ENCODE measurements at regions of chr15 and their contacts with region 1.

Region 1: DNA sequence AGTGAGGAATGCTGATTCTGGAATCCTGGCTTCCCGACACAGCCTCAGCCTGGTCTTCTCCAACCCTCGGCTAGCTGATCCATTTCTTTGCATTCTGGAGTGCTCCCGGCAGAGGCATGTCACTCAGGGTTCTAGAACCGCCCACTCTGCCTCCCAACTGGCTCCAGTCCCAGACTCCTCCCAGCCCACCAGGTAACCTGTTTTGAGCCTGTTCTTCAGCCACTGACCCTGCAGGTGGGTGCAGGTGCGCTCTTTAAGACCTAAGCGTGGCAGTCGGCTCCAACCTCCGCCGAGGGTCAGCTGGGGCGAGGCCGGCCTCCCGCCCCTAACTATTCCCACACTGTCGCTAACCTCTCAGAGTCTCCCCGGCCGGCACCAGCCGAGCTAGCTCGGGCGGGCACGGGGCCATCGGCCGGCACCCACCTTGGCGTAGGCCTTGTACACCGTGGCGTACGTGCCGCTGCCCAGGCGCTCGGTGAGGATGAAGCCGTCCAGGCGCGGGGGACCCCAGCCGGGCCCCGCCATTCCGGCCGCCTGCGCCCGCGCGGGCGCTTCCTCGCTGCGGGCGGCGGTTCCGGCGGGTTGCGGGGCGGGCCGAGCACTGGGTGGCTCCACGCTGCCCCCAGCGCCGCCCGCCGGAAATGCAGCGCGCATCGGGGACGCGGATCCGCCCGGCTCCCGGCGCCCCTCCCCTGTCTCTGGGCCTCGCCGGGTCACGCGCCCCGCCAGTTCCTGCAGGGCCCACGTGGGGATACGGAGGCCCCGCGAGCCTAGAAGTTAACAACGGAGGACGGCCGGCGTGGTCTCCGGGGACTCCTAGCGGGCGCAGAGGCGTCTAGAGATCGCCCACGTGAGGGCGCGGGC is at the start of gene ULK3:
- DNase-seq: peak; percentile 90 to 96
- ATAC-seq: peak; percentile 87 to 91
- H3K4me3 ChIP-seq: peak within 1 kb of the TSS; percentile 66
- H3K27ac ChIP-seq: peak within 1 kb of the TSS; percentile 89 to 95
- H3K4me1 ChIP-seq: peaks cover 13% of the 10 kb centered on the region
- CTCF ChIP-seq: peak; percentile 78
- EP300 ChIP-seq: no peak
- POLR2A ChIP-seq: peak; percentile 88
- RAD21 ChIP-seq: no peak; a peak in 1 of 5 replicates
- polyA plus RNA-seq, gene ULK3: 48.9 and 58.4 TPM in 2 replicates

Region 2: DNA sequence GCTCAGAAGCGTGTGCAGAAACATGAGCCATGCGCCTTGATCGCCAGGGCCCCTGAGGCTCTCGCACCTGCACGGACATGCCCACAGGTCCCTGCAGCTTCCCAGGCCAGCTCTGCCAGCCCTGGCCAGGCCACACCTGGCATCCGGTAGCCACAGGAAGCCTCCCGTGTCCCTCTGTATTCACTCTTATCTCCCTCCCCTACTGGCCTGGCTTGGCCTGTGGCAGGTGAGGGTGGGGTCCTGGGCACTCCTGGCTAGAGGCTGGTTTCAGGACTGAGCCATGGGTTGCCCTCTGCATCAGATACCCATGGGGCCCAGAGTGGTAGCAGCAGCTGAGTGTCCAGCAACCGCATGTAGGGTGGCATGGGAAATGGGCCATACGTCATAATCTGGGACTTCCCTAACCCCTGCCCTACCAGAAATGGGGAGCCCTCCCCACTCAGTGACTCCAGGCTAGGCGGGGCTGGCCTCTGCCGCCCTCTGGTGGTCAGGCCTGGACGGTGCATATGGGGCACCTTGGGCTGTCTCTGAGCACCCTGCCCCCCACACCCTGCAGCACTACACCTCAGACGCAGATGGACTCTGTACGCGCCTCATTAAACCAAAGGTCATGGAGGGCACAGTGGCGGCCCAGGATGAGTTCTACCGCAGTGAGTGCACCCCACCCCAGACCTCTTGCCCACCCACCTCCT is 42.8 kb before region 1 on chr15:
- CTCF ChIA-PET with region 1: interaction called, 1,908 read pairs
- POLR2A ChIA-PET with region 1: interaction called, 3 read pairs
- DNase-seq: peak; percentile 68 to 95
- ATAC-seq: peak; percentile 85 to 97
- H3K4me3 ChIP-seq: no peak overlapping the region
- H3K27ac ChIP-seq: peak overlapping the region in 1 of 2 experiments; percentile 57; a peak in 3 of 6 replicates
- H3K4me1 ChIP-seq: peaks cover 3% of the 10 kb centered on the region; the same call in 1 of the 3 replicates
- CTCF ChIP-seq: peak; percentile 90
- EP300 ChIP-seq: no peak
- POLR2A ChIP-seq: no peak
- RAD21 ChIP-seq: peak; percentile 72 to 74

Region 3: DNA sequence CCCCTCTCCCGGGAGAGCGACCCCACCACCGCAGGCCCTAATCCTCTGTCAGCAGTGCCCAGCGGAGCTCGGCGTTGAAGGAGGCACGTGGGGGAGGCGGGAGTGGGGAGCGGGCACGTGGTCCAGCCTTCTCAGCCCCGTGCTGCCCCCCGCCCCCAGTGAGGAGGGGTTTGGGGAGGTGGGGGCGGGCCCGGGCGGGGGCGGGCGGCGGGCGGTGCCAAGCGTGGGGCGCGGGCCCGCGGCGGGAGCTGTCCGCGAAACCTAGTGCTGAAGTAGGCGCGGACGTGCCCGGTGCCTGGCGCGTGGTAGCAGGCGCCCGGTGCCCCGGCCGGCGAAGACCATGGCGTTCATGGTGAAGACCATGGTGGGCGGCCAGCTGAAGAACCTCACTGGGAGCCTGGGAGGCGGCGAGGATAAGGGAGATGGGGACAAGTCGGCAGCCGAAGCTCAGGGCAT is 16.4 kb before region 1 on chr15 and contains the start of gene CPLX3:
- CTCF ChIA-PET with region 1: interaction called, 1,908 read pairs
- POLR2A ChIA-PET with region 1: interaction called, 3 read pairs
- DNase-seq: no peak
- ATAC-seq: peak in 1 of 2 experiments; percentile 19; a peak in 1 of 6 replicates
- H3K4me3 ChIP-seq: no peak within 1 kb of the TSS
- H3K27ac ChIP-seq: no peak within 1 kb of the TSS
- H3K4me1 ChIP-seq: peaks cover 7% of the 10 kb centered on the region; the same call in 1 of the 3 replicates
- CTCF ChIP-seq: no peak
- EP300 ChIP-seq: no peak
- POLR2A ChIP-seq: no peak
- RAD21 ChIP-seq: no peak
- polyA plus RNA-seq, gene CPLX3: 0.05 TPM in 1 of 2 replicates, not detected in the other

Region 4: DNA sequence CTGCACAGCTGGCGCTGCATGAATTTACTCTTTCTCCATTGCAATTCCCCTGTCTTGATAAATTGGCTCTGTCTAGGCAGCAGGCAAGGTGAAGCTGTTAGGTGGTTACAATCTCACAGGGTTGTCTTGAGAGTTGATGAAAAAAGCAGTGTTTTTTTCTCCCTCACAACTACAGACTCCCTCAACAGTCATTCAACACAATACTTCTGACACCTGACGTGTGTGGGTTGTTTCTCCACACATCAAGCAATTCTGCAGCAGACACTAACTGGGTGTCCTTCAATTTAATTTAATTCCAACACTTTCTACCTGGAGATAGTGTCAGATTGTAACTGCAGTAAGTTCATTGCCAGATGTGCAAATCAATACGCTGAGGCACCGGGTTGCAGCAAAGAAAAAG is 35.5 kb after region 1 on chr15:
- CTCF ChIA-PET with region 1: no interaction called
- POLR2A ChIA-PET with region 1: no interaction called
- DNase-seq: no peak
- ATAC-seq: no peak
- H3K4me3 ChIP-seq: no peak overlapping the region
- H3K27ac ChIP-seq: no peak overlapping the region
- H3K4me1 ChIP-seq: no peaks in the 10 kb centered on the region
- CTCF ChIP-seq: no peak
- EP300 ChIP-seq: no peak
- POLR2A ChIP-seq: no peak
- RAD21 ChIP-seq: no peak

Region 5: GRCh38 chr15:74889883-74890664 is 47.3 kb after region 1 on chr15 and contains the start of gene MPI:
- CTCF ChIA-PET with region 1: no interaction called
- POLR2A ChIA-PET with region 1: no interaction called
- DNase-seq: peak; percentile 80 to 100
- ATAC-seq: peak; percentile 96 to 99
- H3K4me3 ChIP-seq: peak within 1 kb of the TSS; percentile 63
- H3K27ac ChIP-seq: peak within 1 kb of the TSS; percentile 78 to 90
- H3K4me1 ChIP-seq: peaks cover 9% of the 10 kb centered on the region; the same call in 1 of the 3 replicates
- CTCF ChIP-seq: no peak
- EP300 ChIP-seq: no peak
- POLR2A ChIP-seq: peak; percentile 99
- RAD21 ChIP-seq: no peak
- polyA plus RNA-seq, gene MPI: 53.7 and 74.4 TPM in 2 replicates

Region 6: GRCh38 chr15:74995241-74995778 is 152.5 kb after region 1 on chr15 and contains the start of gene SCAMP5:
- CTCF ChIA-PET with region 1: no interaction called
- POLR2A ChIA-PET with region 1: no interaction called
- DNase-seq: peak; percentile 95 to 98
- ATAC-seq: peak; percentile 91 to 94
- H3K4me3 ChIP-seq: peak within 1 kb of the TSS; percentile 73
- H3K27ac ChIP-seq: peak within 1 kb of the TSS; percentile 80 to 89
- H3K4me1 ChIP-seq: peaks cover 7% of the 10 kb centered on the region; the same call in 2 of the 3 replicates
- CTCF ChIP-seq: no peak
- EP300 ChIP-seq: no peak
- POLR2A ChIP-seq: peak; percentile 65
- RAD21 ChIP-seq: no peak
- polyA plus RNA-seq, gene SCAMP5: 10.5 and 11.8 TPM in 2 replicates